AG04450 (cell line): ENCODE measurements at regions of chr5 and their contacts with region 1.

Region 1: GRCh38 chr5:73693481-73694061 is 67.6 kb downstream of the ARHGEF28 start:
- DNase-seq: peak; percentile 18
- H3K4me3 ChIP-seq: no peak overlapping the region
- H3K27ac ChIP-seq: peak overlapping the region; percentile 39
- H3K27me3 ChIP-seq: no peaks in the 10 kb centered on the region
- CTCF ChIP-seq: peak; percentile 62

Region 2: GRCh38 chr5:73596705-73597328 is 96.8 kb before region 1 on chr5:
- CTCF ChIA-PET with region 1: interaction called, 40 read pairs
- POLR2A ChIA-PET with region 1: no interaction called
- DNase-seq: no peak
- H3K4me3 ChIP-seq: no peak overlapping the region
- H3K27ac ChIP-seq: no peak overlapping the region
- H3K27me3 ChIP-seq: no peaks in the 10 kb centered on the region
- CTCF ChIP-seq: peak; percentile 47

Region 3: GRCh38 chr5:73678322-73678740 is 15.2 kb before region 1 on chr5:
- CTCF ChIA-PET with region 1: interaction called, 12 read pairs
- POLR2A ChIA-PET with region 1: interaction called, 7 read pairs
- DNase-seq: no peak
- H3K4me3 ChIP-seq: no peak overlapping the region
- H3K27ac ChIP-seq: no peak overlapping the region
- H3K27me3 ChIP-seq: no peaks in the 10 kb centered on the region
- CTCF ChIP-seq: no peak

Region 4: GRCh38 chr5:73709536-73710129 is 16.1 kb after region 1 on chr5:
- CTCF ChIA-PET with region 1: interaction called, 10 read pairs
- POLR2A ChIA-PET with region 1: no interaction called
- DNase-seq: no peak
- H3K4me3 ChIP-seq: no peak overlapping the region
- H3K27ac ChIP-seq: no peak overlapping the region
- H3K27me3 ChIP-seq: no peaks in the 10 kb centered on the region
- CTCF ChIP-seq: no peak

Region 5: GRCh38 chr5:73786043-73786831 is 92.7 kb after region 1 on chr5:
- CTCF ChIA-PET with region 1: no interaction called
- POLR2A ChIA-PET with region 1: no interaction called
- DNase-seq: no peak
- H3K4me3 ChIP-seq: no peak overlapping the region
- H3K27ac ChIP-seq: no peak overlapping the region
- H3K27me3 ChIP-seq: no peaks in the 10 kb centered on the region
- CTCF ChIP-seq: no peak

Region 6: GRCh38 chr5:73867345-73868335 is 174.1 kb after region 1 on chr5:
- CTCF ChIA-PET with region 1: no interaction called
- POLR2A ChIA-PET with region 1: no interaction called
- DNase-seq: peak; percentile 39
- H3K4me3 ChIP-seq: no peak overlapping the region
- H3K27ac ChIP-seq: no peak overlapping the region
- H3K27me3 ChIP-seq: no peaks in the 10 kb centered on the region
- CTCF ChIP-seq: no peak